ENCODE measurements at regions of chr11 and their contacts with region 1.

Region 1: DNA sequence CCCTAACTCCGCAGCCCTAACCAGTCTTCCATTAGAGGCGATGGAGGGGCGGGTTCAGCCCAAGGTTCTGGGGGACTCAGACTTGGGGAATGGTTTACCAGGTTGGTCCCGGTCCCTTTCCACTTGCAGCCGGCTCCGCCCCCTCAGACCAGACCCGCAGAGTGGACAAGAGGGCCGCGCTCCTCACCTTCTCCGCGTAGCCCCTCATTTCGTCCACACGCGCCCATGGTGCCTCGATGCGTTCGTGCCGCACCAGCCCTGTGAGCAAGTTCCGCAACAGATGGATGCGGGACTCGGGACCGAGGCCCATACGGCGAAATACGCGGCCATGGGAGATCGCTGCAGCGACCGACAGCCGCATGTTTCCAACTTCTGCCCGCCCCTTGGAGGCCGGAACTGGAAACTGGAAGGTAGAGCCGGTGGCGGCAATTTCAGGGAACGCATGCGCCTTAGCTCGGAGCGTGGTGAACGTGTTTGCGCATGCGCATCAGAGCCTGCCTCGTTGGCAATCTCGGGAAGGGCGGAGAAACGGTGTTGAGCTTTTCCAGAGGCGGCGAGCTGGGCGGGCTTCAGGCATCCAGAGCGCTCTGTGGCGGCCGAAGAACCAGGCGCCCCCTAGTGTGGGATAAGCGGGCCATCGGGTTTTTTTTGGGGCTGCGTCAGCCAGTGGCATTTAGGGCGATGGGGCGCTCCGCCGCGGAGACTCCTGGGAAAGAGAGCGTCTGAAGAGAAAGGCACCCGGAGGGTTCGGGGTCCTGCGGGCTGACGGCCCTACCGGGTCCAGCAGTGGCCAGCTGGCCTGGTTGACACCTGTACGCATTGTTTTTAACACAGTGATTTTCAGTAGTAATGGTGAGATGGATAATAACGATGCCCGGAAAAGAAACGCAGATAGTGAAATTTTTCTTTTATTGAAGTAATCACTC is at the start of gene MRPL17:
- DNase-seq: peak; percentile 97
- ATAC-seq: peak; percentile 97
- H3K4me3 Mint-ChIP-seq: peak within 1 kb of the TSS; percentile 92
- H3K27ac Mint-ChIP-seq: peak within 1 kb of the TSS; percentile 97
- H3K4me1 Mint-ChIP-seq: peaks cover 15% of the 10 kb centered on the region
- H3K27me3 Mint-ChIP-seq: no peaks in the 10 kb centered on the region
- total RNA-seq, gene MRPL17: 50.9 to 51.4 TPM

Region 2: DNA sequence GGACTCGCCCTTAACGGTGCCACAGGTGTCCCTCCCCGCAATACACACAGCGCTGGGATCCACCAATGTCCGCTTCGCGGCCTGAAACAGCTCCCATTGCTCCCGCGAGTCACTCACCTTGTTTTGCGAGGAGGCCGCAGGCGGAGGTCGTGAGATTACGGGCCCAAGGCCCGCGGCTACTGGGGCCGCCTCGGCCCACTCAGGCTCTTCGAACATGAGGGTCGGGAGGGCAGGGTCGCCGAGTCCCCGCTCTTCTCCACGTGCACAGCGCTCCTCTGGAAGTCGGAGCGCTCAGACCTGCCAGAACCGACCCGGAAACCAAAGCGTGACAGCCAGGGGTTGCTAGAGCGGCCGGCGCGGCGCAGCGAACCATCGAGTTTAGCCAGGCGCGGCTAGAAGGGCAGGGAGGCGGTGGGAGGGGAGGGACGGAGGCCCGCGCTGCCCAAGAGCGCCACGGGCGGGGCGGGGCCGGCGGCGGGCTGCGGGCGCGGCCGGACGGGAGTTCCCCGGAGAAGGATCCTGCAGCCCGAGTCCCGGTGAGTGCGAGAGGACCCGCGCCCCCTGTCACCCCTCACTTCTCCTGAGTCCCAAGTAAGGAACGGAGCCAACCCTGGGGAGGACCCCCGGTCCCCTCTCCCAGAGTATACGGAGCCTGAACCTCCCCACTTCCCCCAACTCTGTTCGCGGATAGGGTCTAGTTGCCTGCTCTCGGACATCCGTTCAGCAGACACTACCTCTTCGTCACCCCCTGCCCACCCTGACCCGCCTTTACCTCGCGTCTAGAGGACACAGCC is 79.7 kb before region 1 on chr11 and contains the starts of genes ILK and RRP8:
- POLR2A ChIA-PET with region 1: interaction called, 20 read pairs
- DNase-seq: peak; percentile 90
- ATAC-seq: peak; percentile 75
- H3K4me3 Mint-ChIP-seq: no peak within 1 kb of the TSS
- H3K27ac Mint-ChIP-seq: no peak within 1 kb of the TSS
- H3K4me1 Mint-ChIP-seq: peaks cover 35% of the 10 kb centered on the region
- H3K27me3 Mint-ChIP-seq: no peaks in the 10 kb centered on the region
- total RNA-seq, gene ILK: 195 to 207 TPM
- total RNA-seq, gene RRP8: 31.7 to 34.4 TPM

Region 3: GRCh38 chr11:6619004-6619745 is 64.0 kb before region 1 on chr11 and contains the start of gene TPP1:
- POLR2A ChIA-PET with region 1: interaction called, 33 read pairs
- DNase-seq: peak; percentile 86
- ATAC-seq: peak; percentile 93
- H3K4me3 Mint-ChIP-seq: no peak within 1 kb of the TSS
- H3K27ac Mint-ChIP-seq: no peak within 1 kb of the TSS
- H3K4me1 Mint-ChIP-seq: peaks cover 5% of the 10 kb centered on the region
- H3K27me3 Mint-ChIP-seq: no peaks in the 10 kb centered on the region
- total RNA-seq, gene TPP1: 114 to 120 TPM